H1 (cell line): ENCODE measurements at regions of chr9 and their contacts with region 1.

Region 1: GRCh38 chr9:36328798-36329411 is 70.7 kb upstream of the GNE start:
- DNase-seq: no peak
- H3K4me3 ChIP-seq: no peak overlapping the region
- H3K27ac ChIP-seq: no peak overlapping the region
- H3K4me1 ChIP-seq: no peaks in the 10 kb centered on the region
- H3K27me3 ChIP-seq: no peaks in the 10 kb centered on the region
- CTCF ChIP-seq: peak in 2 of 3 experiments; percentile 51 to 68; a peak in 3 of 4 replicates
- EP300 ChIP-seq: no peak
- POLR2A ChIP-seq: no peak
- RAD21 ChIP-seq: peak; percentile 75 to 78

Region 2: DNA sequence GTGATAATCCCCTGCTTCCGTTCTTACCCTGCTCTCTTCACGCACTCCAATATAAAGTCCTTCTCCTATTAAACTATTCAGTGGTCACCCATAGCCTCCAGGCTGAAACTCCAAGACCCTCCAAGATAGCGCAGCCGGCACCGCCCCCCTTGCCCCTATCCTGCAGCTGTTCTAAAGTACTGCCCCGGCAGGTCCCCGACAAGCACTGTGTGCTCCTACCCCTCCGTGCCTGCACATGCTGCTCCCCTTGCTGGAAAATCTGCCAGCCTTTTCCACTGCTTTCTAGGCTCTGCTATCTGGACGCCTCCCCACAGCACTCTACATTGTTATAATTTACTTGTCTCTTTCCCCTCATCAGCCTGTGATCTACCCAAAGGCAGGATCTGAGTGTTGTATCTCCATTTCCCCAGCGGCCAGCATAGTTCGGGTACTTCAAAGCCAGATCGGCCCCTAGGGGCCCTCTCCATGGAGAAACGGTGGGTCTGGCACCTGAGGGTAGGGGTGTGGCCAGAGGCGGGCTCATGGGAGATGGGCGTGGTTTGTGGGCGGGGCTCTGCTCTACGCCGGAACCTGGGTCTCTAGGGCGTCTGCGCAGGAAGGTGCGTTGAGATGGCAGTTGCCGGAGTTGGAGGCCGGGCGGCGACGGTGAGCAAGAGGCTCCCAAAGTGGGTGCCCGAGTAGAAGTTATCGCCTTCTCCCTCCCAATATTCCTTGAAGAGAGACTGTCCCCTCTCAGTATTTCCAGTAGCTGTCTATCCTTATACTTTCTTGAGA is 922.5 kb before region 1 on chr9:
- CTCF ChIA-PET with region 1: no interaction called
- POLR2A ChIA-PET with region 1: no interaction called
- DNase-seq: peak; percentile 80 to 99
- H3K4me3 ChIP-seq: peak overlapping the region; percentile 45 to 68 (median 58); a peak in 7 of 8 replicates
- H3K27ac ChIP-seq: no peak overlapping the region
- H3K4me1 ChIP-seq: peaks cover 0 to 7% (median 5%) of the 10 kb centered on the region in 4 experiments; a peak in 5 of 7 replicates
- H3K27me3 ChIP-seq: no peaks in the 10 kb centered on the region
- CTCF ChIP-seq: peak; percentile 26 to 35 (median 28); a peak in 3 of 4 replicates
- EP300 ChIP-seq: no peak
- POLR2A ChIP-seq: peak in 1 of 2 experiments; percentile 80; a peak in 2 of 3 replicates
- RAD21 ChIP-seq: peak; percentile 20 to 33; a peak in 2 of 4 replicates

Region 3: DNA sequence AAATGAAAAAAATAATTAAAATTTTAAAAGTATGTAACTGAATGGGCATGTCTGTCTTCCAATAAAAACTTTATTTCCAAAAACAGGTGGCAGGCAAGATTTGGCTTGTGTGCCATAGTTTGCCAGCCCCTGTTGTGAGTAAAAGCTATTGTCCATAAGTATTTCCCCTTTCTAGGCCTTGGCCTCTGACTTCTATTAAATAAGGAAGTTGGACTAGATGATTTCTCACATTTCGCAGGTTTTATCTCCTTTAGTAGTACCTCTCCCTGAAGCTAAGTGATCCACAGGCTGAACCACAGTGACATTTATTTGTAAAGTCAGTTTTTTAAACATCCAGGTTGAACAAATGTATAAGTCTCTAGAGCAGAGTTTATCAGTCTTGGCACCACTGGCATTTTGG is 250.9 kb before region 1 on chr9:
- CTCF ChIA-PET with region 1: no interaction called
- POLR2A ChIA-PET with region 1: no interaction called
- DNase-seq: no peak
- H3K4me3 ChIP-seq: no peak overlapping the region
- H3K27ac ChIP-seq: no peak overlapping the region
- H3K4me1 ChIP-seq: no peaks in the 10 kb centered on the region
- H3K27me3 ChIP-seq: no peaks in the 10 kb centered on the region
- CTCF ChIP-seq: no peak
- EP300 ChIP-seq: no peak
- POLR2A ChIP-seq: no peak
- RAD21 ChIP-seq: no peak

Region 4: GRCh38 chr9:36190388-36191287 is 138.3 kb before region 1 on chr9 and contains the start of gene CLTA:
- CTCF ChIA-PET with region 1: interaction called, 5 read pairs
- POLR2A ChIA-PET with region 1: interaction called, 10 read pairs
- DNase-seq: peak; percentile 92 to 93
- H3K4me3 ChIP-seq: peak within 1 kb of the TSS; percentile 86 to 98 (median 97)
- H3K27ac ChIP-seq: peak within 1 kb of the TSS; percentile 89
- H3K4me1 ChIP-seq: peaks cover 6 to 12% (median 10%) of the 10 kb centered on the region in 4 experiments; a peak in 6 of 7 replicates
- H3K27me3 ChIP-seq: no peaks in the 10 kb centered on the region
- CTCF ChIP-seq: peak in 1 of 3 experiments; percentile 35; a peak in 1 of 4 replicates
- EP300 ChIP-seq: no peak
- POLR2A ChIP-seq: peak; percentile 92 to 97
- RAD21 ChIP-seq: no peak
- total RNA-seq, gene CLTA: 236 and 239 TPM in 2 replicates

Region 5: DNA sequence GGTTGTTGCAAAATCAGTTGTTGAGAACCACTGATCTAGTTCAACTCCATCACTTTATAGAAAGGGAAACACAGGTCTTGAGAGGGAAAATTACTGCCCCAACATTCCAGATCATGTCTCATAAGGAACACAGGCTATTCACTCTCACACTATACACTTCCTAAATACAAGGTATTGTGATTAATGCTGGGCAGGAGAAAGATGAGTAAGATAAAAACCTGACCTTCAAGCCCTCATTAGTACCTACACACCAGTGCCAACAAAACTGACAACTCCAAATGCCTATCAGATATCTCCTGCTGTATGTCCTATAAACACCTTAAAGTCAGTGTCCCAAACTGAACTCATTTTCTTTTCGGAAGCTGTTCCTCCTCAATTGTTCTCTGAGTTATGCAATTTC is 78.8 kb before region 1 on chr9:
- CTCF ChIA-PET with region 1: interaction called, 23 read pairs
- POLR2A ChIA-PET with region 1: interaction called, 4 read pairs
- DNase-seq: no peak
- H3K4me3 ChIP-seq: no peak overlapping the region
- H3K27ac ChIP-seq: no peak overlapping the region
- H3K4me1 ChIP-seq: no peaks in the 10 kb centered on the region
- H3K27me3 ChIP-seq: no peaks in the 10 kb centered on the region
- CTCF ChIP-seq: no peak
- EP300 ChIP-seq: no peak
- POLR2A ChIP-seq: no peak
- RAD21 ChIP-seq: no peak

Region 6: DNA sequence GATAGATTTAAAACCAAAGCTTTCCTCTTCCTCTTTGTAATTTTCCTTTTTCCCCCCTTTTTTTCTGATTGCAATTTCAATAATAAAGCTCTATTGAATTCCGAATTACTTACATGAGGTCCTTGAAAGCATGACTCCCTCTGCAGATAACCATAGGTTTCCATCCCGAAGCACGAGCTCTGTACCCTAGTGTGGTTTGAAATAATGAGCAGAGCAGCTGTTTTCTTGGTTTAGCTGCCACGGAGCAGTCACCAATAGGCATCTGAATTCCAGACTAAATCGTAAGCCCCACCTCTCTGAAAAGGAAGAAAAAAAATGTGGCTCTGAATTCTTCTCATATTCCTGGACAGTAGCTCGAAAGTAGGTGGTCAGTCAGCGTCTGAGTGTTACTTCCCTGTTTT is 52.1 kb before region 1 on chr9:
- CTCF ChIA-PET with region 1: interaction called, 11 read pairs
- POLR2A ChIA-PET with region 1: no interaction called
- DNase-seq: no peak
- H3K4me3 ChIP-seq: no peak overlapping the region
- H3K27ac ChIP-seq: no peak overlapping the region
- H3K4me1 ChIP-seq: no peaks in the 10 kb centered on the region
- H3K27me3 ChIP-seq: no peaks in the 10 kb centered on the region; a peak in 1 of 7 replicates
- CTCF ChIP-seq: no peak
- EP300 ChIP-seq: no peak
- POLR2A ChIP-seq: no peak
- RAD21 ChIP-seq: no peak

Region 7: GRCh38 chr9:36345103-36345849 is 16.4 kb after region 1 on chr9:
- CTCF ChIA-PET with region 1: interaction called, 16 read pairs
- POLR2A ChIA-PET with region 1: interaction called, 3 read pairs
- DNase-seq: peak in 1 of 2 experiments; percentile 13
- H3K4me3 ChIP-seq: no peak overlapping the region
- H3K27ac ChIP-seq: no peak overlapping the region
- H3K4me1 ChIP-seq: no peaks in the 10 kb centered on the region
- H3K27me3 ChIP-seq: no peaks in the 10 kb centered on the region
- CTCF ChIP-seq: peak in 2 of 3 experiments; percentile 42 to 68; a peak in 3 of 4 replicates
- EP300 ChIP-seq: no peak
- POLR2A ChIP-seq: no peak
- RAD21 ChIP-seq: no peak; a peak in 1 of 4 replicates

Region 8: GRCh38 chr9:36470643-36471290 is 141.9 kb after region 1 on chr9:
- CTCF ChIA-PET with region 1: no interaction called
- POLR2A ChIA-PET with region 1: no interaction called
- DNase-seq: no peak
- H3K4me3 ChIP-seq: no peak overlapping the region
- H3K27ac ChIP-seq: no peak overlapping the region
- H3K4me1 ChIP-seq: no peaks in the 10 kb centered on the region; a peak in 1 of 7 replicates
- H3K27me3 ChIP-seq: no peaks in the 10 kb centered on the region
- CTCF ChIP-seq: no peak
- EP300 ChIP-seq: no peak
- POLR2A ChIP-seq: no peak
- RAD21 ChIP-seq: no peak